CD8-positive, alpha-beta T cell (primary cell): ENCODE measurements at regions of chr22 and their contacts with region 1.

Region 1: GRCh38 chr22:37218771-37219411 is 6.6 kb upstream of the SSTR3 start:
- DNase-seq: peak in 8 of 9 experiments; percentile 43 to 92 (median 78)
- ATAC-seq: peak; percentile 79
- H3K4me3 ChIP-seq: peak overlapping the region; percentile 23 to 52
- H3K4me3 Mint-ChIP-seq: peak overlapping the region; percentile 74
- H3K27ac ChIP-seq: peak overlapping the region; percentile 54 to 60
- H3K27ac Mint-ChIP-seq: peak overlapping the region; percentile 95
- H3K4me1 ChIP-seq: peaks cover 79% of the 10 kb centered on the region
- H3K4me1 Mint-ChIP-seq: peaks cover 90% of the 10 kb centered on the region
- H3K27me3 ChIP-seq: no peaks in the 10 kb centered on the region
- H3K27me3 Mint-ChIP-seq: no peaks in the 10 kb centered on the region
- CTCF ChIP-seq: no peak

Region 2: DNA sequence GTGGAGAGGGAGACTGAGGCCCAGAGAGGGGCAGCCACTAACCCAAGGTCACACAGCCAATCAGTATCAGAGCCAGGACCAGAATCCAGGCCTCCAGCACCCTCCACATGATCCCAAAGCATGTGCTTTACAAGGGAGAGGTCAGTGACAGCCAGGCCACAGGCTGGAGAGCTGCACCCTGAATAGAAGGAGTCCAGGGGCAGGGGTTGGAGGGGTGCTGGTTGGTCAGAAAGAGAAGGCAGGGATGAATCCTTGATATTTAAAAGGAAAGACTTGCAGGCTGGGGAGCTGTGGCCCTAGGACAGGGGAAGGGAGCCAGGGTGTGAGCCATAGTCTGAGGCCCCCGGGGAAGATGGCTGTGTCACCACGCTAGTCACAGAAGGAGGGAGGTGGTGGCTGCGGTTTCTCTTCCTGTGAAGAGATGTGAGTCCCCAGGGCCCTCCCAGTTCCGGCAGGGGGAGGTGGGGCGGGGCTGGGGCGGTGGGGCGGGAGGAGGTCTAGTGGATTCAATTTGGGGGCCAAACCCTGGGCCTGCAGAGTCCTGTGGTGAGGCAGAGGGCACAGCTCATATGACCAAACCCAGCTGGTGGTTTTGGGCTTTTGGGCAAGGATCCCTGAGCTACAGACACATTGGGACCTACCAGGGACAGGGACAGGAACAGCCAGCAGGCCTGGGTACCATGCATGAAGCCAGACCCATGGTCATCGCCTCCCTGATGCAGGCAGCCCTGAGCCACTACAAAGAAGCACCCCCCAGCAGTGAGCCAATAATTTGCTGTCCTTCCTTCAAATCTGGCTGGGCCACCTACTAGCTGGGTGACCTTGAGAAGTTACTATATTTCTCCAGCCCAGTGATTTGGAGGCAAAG is 11.1 kb after region 1 on chr22:
- CTCF ChIA-PET with region 1: interaction called, 45 read pairs
- POLR2A ChIA-PET with region 1: interaction called, 48 read pairs
- intact Hi-C with region 1: loop called (anchors 1 kb)
- DNase-seq: peak; percentile 80 to 97 (median 91)
- ATAC-seq: peak; percentile 68
- H3K4me3 ChIP-seq: peak overlapping the region; percentile 36 to 52
- H3K4me3 Mint-ChIP-seq: peak overlapping the region; percentile 80
- H3K27ac ChIP-seq: peak overlapping the region; percentile 75 to 92
- H3K27ac Mint-ChIP-seq: peak overlapping the region; percentile 100
- H3K4me1 ChIP-seq: peaks cover 94% of the 10 kb centered on the region
- H3K4me1 Mint-ChIP-seq: peaks cover 91% of the 10 kb centered on the region
- H3K27me3 ChIP-seq: no peaks in the 10 kb centered on the region
- H3K27me3 Mint-ChIP-seq: no peaks in the 10 kb centered on the region
- CTCF ChIP-seq: no peak

Region 3: GRCh38 chr22:37237371-37238268 is 18.7 kb after region 1 on chr22:
- CTCF ChIA-PET with region 1: interaction called, 29 read pairs
- POLR2A ChIA-PET with region 1: interaction called, 118 read pairs
- intact Hi-C with region 1: loop called in 1 of 2 experiments (anchors 1 kb)
- DNase-seq: peak in 6 of 9 experiments; percentile 23 to 70 (median 52)
- ATAC-seq: peak; percentile 20
- H3K4me3 ChIP-seq: peak overlapping the region; percentile 39 to 50
- H3K4me3 Mint-ChIP-seq: peak overlapping the region; percentile 82
- H3K27ac ChIP-seq: peak overlapping the region; percentile 59 to 81
- H3K27ac Mint-ChIP-seq: peak overlapping the region; percentile 100
- H3K4me1 ChIP-seq: peaks cover 97% of the 10 kb centered on the region
- H3K4me1 Mint-ChIP-seq: peaks cover 98% of the 10 kb centered on the region
- H3K27me3 ChIP-seq: no peaks in the 10 kb centered on the region
- H3K27me3 Mint-ChIP-seq: no peaks in the 10 kb centered on the region
- CTCF ChIP-seq: no peak